ENCODE measurements at regions of chr1 and their contacts with region 1.

Region 1: GRCh38 chr1:37449936-37450335 is 24.4 kb upstream of the ZC3H12A start:
- DNase-seq: no peak
- ATAC-seq: no peak

Region 2: GRCh38 chr1:37486680-37487618 is 37.0 kb after region 1 on chr1:
- intact Hi-C with region 1: loop called (anchors 5 kb)
- DNase-seq: peak; percentile 91
- ATAC-seq: peak; percentile 81

Region 3: GRCh38 chr1:37682334-37682987 is 232.5 kb after region 1 on chr1:
- intact Hi-C with region 1: loop called (anchors 10 kb)
- DNase-seq: peak; percentile 72
- ATAC-seq: peak; percentile 74

Measured in Right ventricle myocardium superior (tissue), 1 donor.